ENCODE measurements at regions of chr2 and their contacts with region 1.

Region 1: GRCh38 chr2:151261231-151261976 is at the start of gene RBM43:
- DNase-seq: peak; percentile 86 to 91 (median 87)
- H3K4me3 ChIP-seq: peak within 1 kb of the TSS; percentile 78 to 98
- H3K4me3 Mint-ChIP-seq: peak within 1 kb of the TSS; percentile 80 to 98 (median 94)
- H3K27ac ChIP-seq: peak within 1 kb of the TSS; percentile 94
- H3K27ac Mint-ChIP-seq: peak within 1 kb of the TSS; percentile 92 to 100 (median 97)
- H3K4me1 ChIP-seq: peaks cover 20% of the 10 kb centered on the region
- H3K4me1 Mint-ChIP-seq: peaks cover 19 to 32% (median 22%) of the 10 kb centered on the region in 4 donors
- H3K27me3 ChIP-seq: no peaks in the 10 kb centered on the region
- H3K27me3 Mint-ChIP-seq: no peaks in the 10 kb centered on the region
- total RNA-seq, gene RBM43: 18.2 to 20.7 TPM

Region 2: DNA sequence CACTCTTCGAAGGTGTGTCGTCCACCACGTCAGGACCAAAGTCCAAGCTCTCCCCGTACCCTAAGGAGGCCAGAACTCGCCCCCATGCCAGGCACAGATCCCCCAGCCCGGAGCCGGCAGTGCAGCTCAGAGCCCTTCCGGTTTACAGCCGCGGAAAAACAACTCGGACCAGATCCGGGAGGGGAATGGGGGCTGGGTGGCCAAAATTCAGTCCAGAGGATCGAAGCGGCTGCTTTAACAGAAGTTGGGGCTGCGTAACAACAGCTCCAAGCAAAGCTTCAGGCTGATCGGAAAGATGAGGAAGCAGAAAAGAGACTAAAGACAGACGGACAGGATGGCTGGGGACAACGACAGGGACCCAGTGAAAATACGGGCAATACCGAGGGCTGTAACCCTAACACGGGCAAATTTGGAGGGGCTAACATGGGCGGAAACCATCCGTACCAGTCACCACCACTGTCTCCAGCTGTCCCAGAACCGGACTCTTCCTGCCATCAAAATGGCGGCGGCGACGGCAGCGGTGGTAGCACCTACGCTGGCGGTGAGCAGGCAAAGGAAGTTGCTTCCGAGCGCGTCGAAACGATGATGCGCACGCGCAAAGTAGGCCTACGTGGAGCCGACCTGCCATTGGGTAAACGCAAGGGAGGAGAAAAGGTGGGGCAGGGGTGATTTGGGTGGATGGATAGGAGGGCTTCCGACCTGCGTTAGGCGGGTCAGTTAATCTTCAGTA is 1674.0 kb before region 1 on chr2 and contains the start of gene MMADHC:
- CTCF ChIA-PET with region 1: interaction called, 3 read pairs
- POLR2A ChIA-PET with region 1: interaction called, 25 read pairs
- intact Hi-C with region 1: loop called (anchors 2 kb)
- DNase-seq: peak; percentile 90 to 93 (median 93)
- H3K4me3 ChIP-seq: peak within 1 kb of the TSS; percentile 90 to 91
- H3K4me3 Mint-ChIP-seq: peak within 1 kb of the TSS; percentile 93 to 100 (median 98)
- H3K27ac ChIP-seq: peak within 1 kb of the TSS; percentile 98
- H3K27ac Mint-ChIP-seq: peak within 1 kb of the TSS; percentile 96 to 100 (median 99)
- H3K4me1 ChIP-seq: peaks cover 40% of the 10 kb centered on the region
- H3K4me1 Mint-ChIP-seq: peaks cover 22 to 55% (median 42%) of the 10 kb centered on the region in 4 donors
- H3K27me3 ChIP-seq: no peaks in the 10 kb centered on the region
- H3K27me3 Mint-ChIP-seq: peaks cover 3 to 17% of the 10 kb centered on the region in 2 donors
- total RNA-seq, gene MMADHC: 66.4 to 69.4 TPM

Region 3: DNA sequence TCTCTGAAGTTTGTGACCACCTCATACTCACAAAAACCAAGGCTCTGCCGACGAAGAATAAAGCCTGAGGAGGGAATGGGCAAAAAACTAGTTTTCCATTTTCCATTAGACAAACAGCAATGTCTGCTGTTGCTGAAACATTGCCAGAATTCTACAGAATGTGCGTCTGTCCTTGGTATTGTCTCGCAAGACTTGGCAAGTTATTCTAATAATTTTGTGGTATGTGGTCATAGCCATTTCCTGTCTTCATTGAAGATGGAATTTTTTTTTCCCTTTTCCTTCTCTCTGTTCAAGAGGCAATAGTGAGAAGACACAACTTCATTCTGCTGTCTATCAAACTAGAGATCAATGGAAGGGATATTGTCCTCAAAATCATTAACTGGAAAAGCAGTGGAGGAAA is 1070.1 kb before region 1 on chr2:
- CTCF ChIA-PET with region 1: no interaction called
- POLR2A ChIA-PET with region 1: no interaction called
- intact Hi-C with region 1: no loop called
- DNase-seq: no peak
- H3K4me3 ChIP-seq: no peak overlapping the region
- H3K4me3 Mint-ChIP-seq: no peak overlapping the region
- H3K27ac ChIP-seq: no peak overlapping the region
- H3K27ac Mint-ChIP-seq: no peak overlapping the region
- H3K4me1 ChIP-seq: no peaks in the 10 kb centered on the region
- H3K4me1 Mint-ChIP-seq: no peaks in the 10 kb centered on the region
- H3K27me3 ChIP-seq: no peaks in the 10 kb centered on the region
- H3K27me3 Mint-ChIP-seq: no peaks in the 10 kb centered on the region

Region 4: GRCh38 chr2:151280271-151280670 is 18.9 kb after region 1 on chr2:
- CTCF ChIA-PET with region 1: interaction called, 3 read pairs
- POLR2A ChIA-PET with region 1: interaction called, 12 read pairs
- intact Hi-C with region 1: no loop called
- DNase-seq: no peak
- H3K4me3 ChIP-seq: no peak overlapping the region
- H3K4me3 Mint-ChIP-seq: no peak overlapping the region
- H3K27ac ChIP-seq: no peak overlapping the region
- H3K27ac Mint-ChIP-seq: no peak overlapping the region
- H3K4me1 ChIP-seq: peaks cover under 1% of the 10 kb centered on the region
- H3K4me1 Mint-ChIP-seq: peaks cover 13 to 15% (median 15%) of the 10 kb centered on the region in 4 donors
- H3K27me3 ChIP-seq: no peaks in the 10 kb centered on the region
- H3K27me3 Mint-ChIP-seq: no peaks in the 10 kb centered on the region

Region 5: GRCh38 chr2:151409601-151410484 is 148.4 kb after region 1 on chr2 and contains the start of gene RIF1:
- CTCF ChIA-PET with region 1: no interaction called
- POLR2A ChIA-PET with region 1: interaction called, 17 read pairs
- intact Hi-C with region 1: loop called (anchors 1 kb)
- DNase-seq: peak; percentile 68 to 77 (median 74)
- H3K4me3 ChIP-seq: peak within 1 kb of the TSS; percentile 69 to 95
- H3K4me3 Mint-ChIP-seq: peak within 1 kb of the TSS; percentile 91 to 99 (median 96)
- H3K27ac ChIP-seq: peak within 1 kb of the TSS; percentile 85
- H3K27ac Mint-ChIP-seq: peak within 1 kb of the TSS; percentile 86 to 97 (median 94)
- H3K4me1 ChIP-seq: peaks cover 22% of the 10 kb centered on the region
- H3K4me1 Mint-ChIP-seq: peaks cover 18 to 46% (median 31%) of the 10 kb centered on the region in 4 donors
- H3K27me3 ChIP-seq: no peaks in the 10 kb centered on the region
- H3K27me3 Mint-ChIP-seq: no peaks in the 10 kb centered on the region
- total RNA-seq, gene RIF1: 72.3 to 73.3 TPM

Region 6: DNA sequence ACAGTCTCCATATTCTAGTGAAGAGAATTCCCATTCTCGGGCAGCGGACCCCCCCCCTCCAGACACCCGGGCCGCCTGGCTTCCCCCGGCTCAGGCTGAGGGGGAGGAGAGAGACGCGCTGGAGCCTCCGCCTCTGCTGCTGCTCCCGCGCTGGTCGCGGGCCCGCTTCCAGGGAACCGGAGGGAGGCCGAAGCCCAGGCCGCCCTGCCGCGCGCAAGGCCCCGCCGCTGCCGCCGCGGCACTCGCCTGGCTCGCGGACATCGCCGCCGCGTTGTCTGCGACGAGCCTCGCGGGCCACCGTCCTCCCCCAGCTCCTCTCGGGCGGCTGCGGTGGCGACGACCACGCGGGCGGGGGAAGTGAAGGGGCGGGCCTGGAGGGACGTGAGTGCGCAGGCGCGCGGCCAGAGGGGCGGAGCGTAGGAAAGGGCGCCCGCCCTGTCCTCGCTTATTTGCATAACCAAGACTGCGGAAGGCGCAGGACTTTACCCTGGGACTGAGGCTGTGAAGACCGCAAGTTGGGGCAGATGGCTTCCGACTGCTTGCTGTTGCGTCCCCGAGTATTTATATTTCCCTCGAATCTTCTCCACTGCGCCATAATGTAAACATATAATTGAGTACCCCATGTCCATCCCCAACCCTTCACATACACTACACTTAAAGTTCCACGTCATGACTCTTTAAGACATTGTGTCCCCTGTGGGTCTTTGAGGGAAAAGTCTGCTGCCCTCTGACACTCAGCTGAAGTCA is 566.9 kb after region 1 on chr2 and contains the start of gene ARL5A:
- CTCF ChIA-PET with region 1: no interaction called
- POLR2A ChIA-PET with region 1: interaction called, 3 read pairs
- intact Hi-C with region 1: loop called (anchors 5 kb)
- DNase-seq: peak; percentile 93 to 97 (median 95)
- H3K4me3 ChIP-seq: peak within 1 kb of the TSS; percentile 62 to 88
- H3K4me3 Mint-ChIP-seq: peak within 1 kb of the TSS; percentile 87 to 97 (median 94)
- H3K27ac ChIP-seq: peak within 1 kb of the TSS; percentile 82
- H3K27ac Mint-ChIP-seq: peak within 1 kb of the TSS; percentile 84 to 97 (median 93)
- H3K4me1 ChIP-seq: peaks cover 44% of the 10 kb centered on the region
- H3K4me1 Mint-ChIP-seq: peaks cover 32 to 57% (median 41%) of the 10 kb centered on the region in 4 donors
- H3K27me3 ChIP-seq: no peaks in the 10 kb centered on the region
- H3K27me3 Mint-ChIP-seq: no peaks in the 10 kb centered on the region
- total RNA-seq, gene ARL5A: 40.9 to 41.6 TPM

Measured in CD4-positive, alpha-beta memory T cell (primary cell).